Mucosa of descending colon (tissue), 3 donors: ENCODE measurements at regions of chr12 and their contacts with region 1.

Region 1: GRCh38 chr12:49110464-49111155 is at the start of gene LMBR1L:
- DNase-seq: peak; percentile 95 to 98 (median 96)
- ATAC-seq: peak; percentile 95
- H3K4me3 ChIP-seq: peak within 1 kb of the TSS; percentile 70
- H3K4me1 ChIP-seq: peaks cover 29% of the 10 kb centered on the region
- CTCF ChIP-seq: peak; percentile 57
- total RNA-seq, gene LMBR1L: 46.1 to 77.4 (median 68.1) TPM

Region 2: DNA sequence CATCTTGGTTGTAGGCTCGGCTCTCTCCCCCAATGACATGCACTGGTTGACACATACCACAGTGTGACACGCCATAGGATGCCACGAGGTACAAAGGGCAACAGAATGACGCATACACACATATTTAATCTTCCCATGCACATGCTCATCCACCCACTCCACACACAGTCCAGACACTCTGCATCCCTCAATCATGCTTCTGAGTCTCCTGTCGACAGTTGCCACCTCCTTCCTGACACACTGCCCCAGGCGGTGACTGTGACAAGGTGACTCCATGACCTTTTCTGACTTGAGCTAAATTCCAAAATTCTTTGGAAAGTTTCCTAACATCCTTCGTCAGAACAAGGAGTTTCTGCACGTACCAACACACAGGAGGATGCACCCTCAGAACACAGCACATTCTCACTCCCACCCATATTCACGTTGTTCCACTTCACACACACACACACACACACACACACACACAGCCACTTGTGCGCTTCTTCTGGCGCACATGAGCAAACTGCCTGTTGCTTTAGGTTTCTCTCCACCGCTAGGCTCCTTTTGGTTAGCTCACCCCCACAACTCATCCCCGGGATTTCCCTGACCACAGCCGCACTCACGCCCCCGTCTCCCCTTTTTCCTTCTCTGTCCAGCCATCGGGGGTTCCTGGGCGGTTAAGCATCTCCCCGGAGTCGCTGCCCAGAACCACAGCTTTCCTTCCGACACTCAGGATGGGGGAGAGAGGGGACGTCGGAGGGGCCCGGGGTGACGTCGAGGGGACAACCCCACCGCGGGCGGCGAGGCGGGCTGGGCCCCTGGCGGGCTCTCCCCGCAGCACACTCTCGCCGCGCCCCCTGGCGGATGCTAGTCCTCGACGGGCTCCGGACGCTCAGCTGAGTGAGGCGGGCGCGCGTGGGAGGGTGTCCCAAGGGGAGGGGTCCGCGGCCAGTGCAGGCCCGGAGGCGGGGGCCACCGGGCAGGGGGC is 133.0 kb before region 1 on chr12:
- intact Hi-C with region 1: no loop called
- DNase-seq: peak; percentile 78 to 81 (median 80)
- ATAC-seq: peak; percentile 67
- H3K4me3 ChIP-seq: no peak overlapping the region
- H3K4me1 ChIP-seq: peaks cover 43% of the 10 kb centered on the region
- CTCF ChIP-seq: peak; percentile 62

Region 3: DNA sequence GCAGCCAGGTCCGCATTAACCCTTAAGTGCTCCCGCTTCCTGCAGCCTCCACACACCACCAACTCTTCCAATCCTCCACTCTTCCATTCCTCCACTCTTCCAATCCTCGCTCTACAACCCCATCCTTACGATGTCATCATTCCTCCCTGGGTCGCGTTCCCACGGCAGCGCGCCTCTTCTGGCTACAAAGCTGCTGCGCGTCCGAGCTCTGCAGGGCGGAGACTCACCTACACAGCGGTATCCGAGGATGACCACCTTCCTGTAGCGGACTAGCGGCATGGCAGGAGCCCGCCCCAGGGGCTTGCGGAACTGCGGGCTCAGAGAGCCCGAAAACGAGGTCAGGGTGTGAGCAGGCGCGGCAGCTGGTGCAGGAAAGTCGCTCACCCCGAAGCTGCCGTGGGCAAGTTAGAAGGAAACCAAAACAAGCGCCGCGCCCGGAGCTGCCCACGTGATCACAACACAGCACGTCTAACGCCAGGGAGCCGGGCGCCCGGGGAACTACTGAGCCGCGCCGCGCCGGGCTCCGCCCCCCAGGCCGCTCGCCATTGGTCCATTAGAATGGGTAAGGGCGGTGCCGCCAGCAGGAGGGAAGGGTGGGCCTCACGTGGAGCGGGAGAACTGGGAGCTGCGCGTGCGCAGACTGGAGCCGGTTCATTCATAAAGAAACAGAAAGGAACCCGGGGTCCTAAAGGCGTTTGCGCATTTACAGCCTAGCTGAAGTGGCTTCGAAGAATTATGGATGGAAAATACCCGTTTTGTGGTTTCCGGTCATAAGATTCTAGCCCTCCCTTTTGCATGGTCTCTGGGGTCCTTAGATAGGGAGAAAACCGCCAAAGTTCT is 40.9 kb before region 1 on chr12 and contains the start of gene RHEBL1:
- intact Hi-C with region 1: loop called in 1 of 2 experiments (anchors 10 kb)
- DNase-seq: peak; percentile 99
- ATAC-seq: peak; percentile 100
- H3K4me3 ChIP-seq: peak within 1 kb of the TSS; percentile 39
- H3K4me1 ChIP-seq: peaks cover 7% of the 10 kb centered on the region
- CTCF ChIP-seq: no peak
- total RNA-seq, gene RHEBL1: 0.23 to 0.58 (median 0.38) TPM